ENCODE measurements at regions of chr7 and their contacts with region 1.

Region 1: DNA sequence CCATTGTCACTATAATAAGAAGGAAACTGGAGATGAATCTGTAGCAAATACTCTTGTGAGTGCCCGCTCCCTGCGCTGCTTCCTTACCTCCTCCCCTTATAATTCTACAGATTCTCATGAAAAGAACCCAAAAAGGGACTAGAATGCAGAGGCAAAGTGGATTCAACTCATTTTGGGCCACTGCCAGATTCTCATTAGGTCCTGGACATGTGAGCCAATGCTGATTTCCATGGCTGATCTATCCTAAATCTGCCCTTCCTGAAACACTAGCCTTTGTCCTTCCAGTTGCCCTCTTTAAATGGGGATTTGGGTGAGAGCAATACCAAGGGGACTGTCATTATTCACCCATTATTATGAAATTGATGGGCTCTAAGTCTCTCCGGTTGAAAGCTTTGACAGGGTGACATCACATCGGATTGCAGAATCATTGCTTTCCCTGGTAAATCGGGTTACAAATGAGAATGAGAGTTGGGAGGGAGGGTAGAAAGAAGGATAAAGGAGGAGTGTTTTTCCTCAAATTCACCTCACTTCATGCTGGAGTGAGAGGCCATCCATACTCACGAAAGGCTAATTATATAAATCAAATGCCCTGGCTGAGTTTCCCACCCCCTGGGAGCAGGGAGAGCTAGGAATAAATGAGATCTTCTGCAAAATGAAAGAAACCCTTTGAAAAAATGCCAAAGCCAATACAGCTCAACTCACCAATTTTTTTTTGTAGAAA is 37.5 kb downstream of the PTN start:
- DNase-seq: no peak
- H3K4me3 ChIP-seq: no peak overlapping the region
- H3K27ac ChIP-seq: no peak overlapping the region
- H3K4me1 ChIP-seq: no peaks in the 10 kb centered on the region
- H3K27me3 ChIP-seq: no peaks in the 10 kb centered on the region; the same call in 1 of the 2 replicates
- CTCF ChIP-seq: no peak

Region 2: GRCh38 chr7:137235434-137235833 is 70.6 kb before region 1 on chr7:
- CTCF ChIA-PET with region 1: no interaction called
- POLR2A ChIA-PET with region 1: no interaction called
- intact Hi-C with region 1: no loop called
- DNase-seq: no peak
- H3K4me3 ChIP-seq: no peak overlapping the region
- H3K27ac ChIP-seq: no peak overlapping the region
- H3K4me1 ChIP-seq: no peaks in the 10 kb centered on the region
- H3K27me3 ChIP-seq: no peaks in the 10 kb centered on the region
- CTCF ChIP-seq: no peak

Region 3: GRCh38 chr7:137462074-137462715 is 156.1 kb after region 1 on chr7:
- CTCF ChIA-PET with region 1: interaction called, 11 read pairs
- POLR2A ChIA-PET with region 1: no interaction called
- intact Hi-C with region 1: no loop called
- DNase-seq: no peak
- H3K4me3 ChIP-seq: no peak overlapping the region
- H3K27ac ChIP-seq: no peak overlapping the region
- H3K4me1 ChIP-seq: no peaks in the 10 kb centered on the region
- H3K27me3 ChIP-seq: no peaks in the 10 kb centered on the region
- CTCF ChIP-seq: no peak